ENCODE measurements at regions of chr1 and their contacts with region 1.

Region 1: GRCh38 chr1:178031856-178032320 is 62.0 kb upstream of the RASAL2 start:
- DNase-seq: peak; percentile 93
- ATAC-seq: peak; percentile 96
- H3K4me3 ChIP-seq: no peak overlapping the region
- H3K27ac ChIP-seq: no peak overlapping the region
- H3K4me1 ChIP-seq: no peaks in the 10 kb centered on the region
- H3K27me3 ChIP-seq: no peaks in the 10 kb centered on the region
- CTCF ChIP-seq: peak; percentile 92
- POLR2A ChIP-seq: 0 out of 2 replicates have a peak, but pooled peaks have one; percentile 23
- RAD21 ChIP-seq: peak; percentile 91

Region 2: DNA sequence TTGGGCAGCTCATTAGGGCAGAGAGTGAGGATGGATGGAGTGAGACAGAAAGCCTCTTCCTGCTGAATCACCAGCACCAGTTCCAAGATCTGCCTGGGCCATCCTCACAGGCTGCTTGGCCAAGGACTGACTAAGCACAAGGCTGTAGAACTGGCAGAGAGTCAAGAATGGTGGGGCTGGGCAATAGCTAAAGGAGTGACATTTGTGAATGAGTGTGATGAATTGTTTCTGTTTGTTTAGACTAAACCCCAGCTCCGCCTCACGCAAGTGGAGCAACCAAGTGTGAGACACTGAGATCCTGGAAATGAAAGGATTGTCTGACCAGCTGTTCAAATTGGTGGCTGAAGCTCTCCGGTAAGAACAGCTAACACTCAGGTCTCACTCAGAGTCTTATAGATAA is 822.5 kb before region 1 on chr1:
- CTCF ChIA-PET with region 1: no interaction called
- POLR2A ChIA-PET with region 1: no interaction called
- dilution Hi-C with region 1: no loop called
- in situ Hi-C with region 1: no loop called
- intact Hi-C with region 1: no loop called
- DNase-seq: peak; percentile 100
- ATAC-seq: peak; percentile 97
- H3K4me3 ChIP-seq: no peak overlapping the region
- H3K27ac ChIP-seq: no peak overlapping the region
- H3K4me1 ChIP-seq: peaks cover 6% of the 10 kb centered on the region
- H3K27me3 ChIP-seq: no peaks in the 10 kb centered on the region
- CTCF ChIP-seq: no peak
- POLR2A ChIP-seq: no peak
- RAD21 ChIP-seq: no peak

Region 3: GRCh38 chr1:177780096-177780700 is 251.7 kb before region 1 on chr1:
- CTCF ChIA-PET with region 1: no interaction called
- POLR2A ChIA-PET with region 1: no interaction called
- dilution Hi-C with region 1: no loop called
- in situ Hi-C with region 1: no loop called
- intact Hi-C with region 1: no loop called
- DNase-seq: peak; percentile 57
- ATAC-seq: peak; percentile 74
- H3K4me3 ChIP-seq: no peak overlapping the region
- H3K27ac ChIP-seq: no peak overlapping the region
- H3K4me1 ChIP-seq: no peaks in the 10 kb centered on the region
- H3K27me3 ChIP-seq: no peaks in the 10 kb centered on the region
- CTCF ChIP-seq: peak; percentile 48
- POLR2A ChIP-seq: no peak
- RAD21 ChIP-seq: peak; percentile 47

Region 4: GRCh38 chr1:177959811-177960515 is 71.9 kb before region 1 on chr1:
- CTCF ChIA-PET with region 1: no interaction called
- POLR2A ChIA-PET with region 1: no interaction called
- dilution Hi-C with region 1: no loop called
- in situ Hi-C with region 1: no loop called
- intact Hi-C with region 1: loop called (anchors 5 kb)
- DNase-seq: peak; percentile 68
- ATAC-seq: peak; percentile 91
- H3K4me3 ChIP-seq: no peak overlapping the region
- H3K27ac ChIP-seq: no peak overlapping the region
- H3K4me1 ChIP-seq: peaks cover 15% of the 10 kb centered on the region
- H3K27me3 ChIP-seq: no peaks in the 10 kb centered on the region
- CTCF ChIP-seq: peak; percentile 66
- POLR2A ChIP-seq: no peak
- RAD21 ChIP-seq: peak; percentile 79

Region 5: GRCh38 chr1:178109348-178110143 is 77.7 kb after region 1 on chr1:
- CTCF ChIA-PET with region 1: no interaction called
- POLR2A ChIA-PET with region 1: no interaction called
- dilution Hi-C with region 1: no loop called
- in situ Hi-C with region 1: no loop called
- intact Hi-C with region 1: no loop called
- DNase-seq: peak; percentile 63
- ATAC-seq: peak; percentile 61
- H3K4me3 ChIP-seq: no peak overlapping the region
- H3K27ac ChIP-seq: no peak overlapping the region
- H3K4me1 ChIP-seq: peaks cover 5% of the 10 kb centered on the region
- H3K27me3 ChIP-seq: no peaks in the 10 kb centered on the region
- CTCF ChIP-seq: no peak
- POLR2A ChIP-seq: no peak
- RAD21 ChIP-seq: no peak

Region 6: DNA sequence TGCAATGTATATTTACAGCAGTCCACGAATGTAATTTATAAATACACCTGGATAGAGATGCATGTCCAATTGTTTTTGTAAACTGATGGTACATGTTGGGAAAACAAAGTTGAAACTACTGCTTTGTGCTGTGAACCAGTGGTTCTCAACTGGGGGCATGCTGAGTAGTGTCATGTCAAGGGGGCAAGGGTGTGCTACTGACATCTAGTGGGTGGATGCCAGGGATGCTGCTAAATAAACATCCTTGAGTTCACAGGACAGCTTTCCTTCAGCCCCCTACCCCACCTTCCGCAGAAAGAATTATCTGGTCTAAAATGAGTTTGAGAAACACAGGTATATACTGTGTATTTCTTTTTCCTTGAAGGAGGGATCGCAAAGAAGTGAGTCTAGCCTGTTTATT is 157.9 kb after region 1 on chr1:
- CTCF ChIA-PET with region 1: no interaction called
- POLR2A ChIA-PET with region 1: no interaction called
- dilution Hi-C with region 1: no loop called
- in situ Hi-C with region 1: no loop called
- intact Hi-C with region 1: loop called (anchors 5 kb)
- DNase-seq: peak; percentile 11
- ATAC-seq: no peak
- H3K4me3 ChIP-seq: no peak overlapping the region
- H3K27ac ChIP-seq: no peak overlapping the region
- H3K4me1 ChIP-seq: peaks cover 2% of the 10 kb centered on the region
- H3K27me3 ChIP-seq: no peaks in the 10 kb centered on the region
- CTCF ChIP-seq: peak; percentile 28; the same call in 1 of the 2 replicates
- POLR2A ChIP-seq: no peak
- RAD21 ChIP-seq: peak; percentile 51

Region 7: GRCh38 chr1:178282949-178283367 is 251.1 kb after region 1 on chr1:
- CTCF ChIA-PET with region 1: interaction called, 29 read pairs
- POLR2A ChIA-PET with region 1: no interaction called
- dilution Hi-C with region 1: loop called (anchors 25 kb)
- in situ Hi-C with region 1: loop called (anchors 5 kb)
- intact Hi-C with region 1: loop called (anchors 1 kb)
- DNase-seq: peak; percentile 86
- ATAC-seq: peak; percentile 91
- H3K4me3 ChIP-seq: no peak overlapping the region
- H3K27ac ChIP-seq: no peak overlapping the region
- H3K4me1 ChIP-seq: peaks cover 13% of the 10 kb centered on the region
- H3K27me3 ChIP-seq: no peaks in the 10 kb centered on the region
- CTCF ChIP-seq: peak; percentile 70
- POLR2A ChIP-seq: no peak
- RAD21 ChIP-seq: peak; percentile 75

Region 8: GRCh38 chr1:178300352-178300699 is 268.4 kb after region 1 on chr1:
- CTCF ChIA-PET with region 1: interaction called, 11 read pairs
- POLR2A ChIA-PET with region 1: no interaction called
- dilution Hi-C with region 1: loop called (anchors 25 kb)
- in situ Hi-C with region 1: no loop called
- intact Hi-C with region 1: loop called (anchors 5 kb)
- DNase-seq: no peak
- ATAC-seq: no peak
- H3K4me3 ChIP-seq: no peak overlapping the region
- H3K27ac ChIP-seq: no peak overlapping the region
- H3K4me1 ChIP-seq: no peaks in the 10 kb centered on the region
- H3K27me3 ChIP-seq: no peaks in the 10 kb centered on the region
- CTCF ChIP-seq: no peak
- POLR2A ChIP-seq: no peak
- RAD21 ChIP-seq: no peak

Measured in IMR-90 (cell line).